Activated naive CD4-positive, alpha-beta T cell treated with anti-CD3 and anti-CD28 coated beads for 36 hours (primary cell): ENCODE measurements at regions of chr6 and their contacts with region 1.

Region 1: DNA sequence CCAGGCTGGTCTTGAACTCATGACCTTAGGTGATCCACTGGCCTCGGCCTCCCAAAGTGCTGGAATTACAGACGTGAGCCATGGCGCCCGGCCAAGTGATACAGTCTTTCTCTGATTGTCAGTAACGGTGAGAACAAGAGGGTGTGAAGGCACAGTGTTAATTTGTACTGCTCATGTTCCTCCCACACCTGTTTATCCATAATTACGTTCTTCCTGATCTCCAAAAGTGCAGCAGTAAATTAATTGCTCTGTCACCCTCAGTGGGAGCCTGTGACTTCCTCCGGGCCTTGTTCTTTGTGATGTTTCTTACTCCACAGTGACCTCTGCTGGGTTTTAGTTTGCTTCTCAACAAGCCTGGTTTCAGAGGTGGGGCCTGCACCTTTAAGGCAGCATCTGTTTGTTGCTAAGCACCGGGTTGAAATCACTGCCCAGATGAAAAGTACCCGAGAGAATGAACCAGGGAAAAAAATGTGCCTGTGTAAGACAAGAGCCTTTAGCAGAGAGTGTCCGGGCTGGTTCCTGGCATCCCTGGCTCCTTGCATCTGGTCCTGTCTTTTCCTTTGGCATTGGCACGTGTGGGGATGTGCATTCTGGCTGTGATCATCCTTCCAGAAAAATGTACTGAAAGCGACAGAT is 89.1 kb upstream of the CLDN20 start:
- DNase-seq: peak; percentile 81
- H3K4me3 Mint-ChIP-seq: no peak overlapping the region
- H3K27ac Mint-ChIP-seq: no peak overlapping the region
- H3K4me1 Mint-ChIP-seq: peaks cover 48% of the 10 kb centered on the region
- H3K27me3 Mint-ChIP-seq: no peaks in the 10 kb centered on the region

Region 2: DNA sequence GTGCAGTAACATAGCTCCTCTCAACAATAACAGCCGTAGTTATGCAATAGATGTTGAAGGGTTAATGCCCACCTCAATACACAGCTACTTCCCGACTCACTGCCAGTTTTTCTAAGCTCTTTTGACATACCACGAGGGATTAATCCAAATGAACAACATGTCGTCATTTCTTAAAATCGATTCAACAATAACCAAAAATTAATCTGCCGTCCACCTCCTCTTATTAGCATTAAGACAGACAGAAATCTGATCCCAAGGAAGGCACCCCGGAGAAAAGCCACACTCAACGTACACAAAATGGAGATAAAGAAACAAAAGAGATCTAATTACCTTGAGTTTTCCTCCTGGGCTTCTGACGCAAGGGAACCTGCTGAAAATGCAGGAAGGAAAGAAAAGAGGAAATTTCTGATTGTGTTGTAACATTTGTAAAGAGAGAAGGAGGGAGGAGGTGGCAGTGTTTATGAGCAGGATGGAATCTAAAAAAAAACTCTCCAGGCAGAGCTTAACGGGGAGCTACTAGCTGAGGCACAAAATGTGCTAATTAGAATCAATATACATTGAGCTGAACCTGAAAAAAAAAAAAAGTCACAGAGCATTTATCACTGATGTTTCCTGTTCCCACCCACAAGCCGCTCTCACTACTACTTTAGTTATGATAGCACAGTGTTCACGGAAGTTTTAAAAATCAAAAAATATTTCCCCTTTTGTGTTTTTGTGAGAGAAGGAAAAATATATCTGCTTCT is 927.4 kb before region 1 on chr6:
- CTCF ChIA-PET with region 1: no interaction called
- intact Hi-C with region 1: loop called (anchors 1 kb)
- DNase-seq: peak; percentile 69
- H3K4me3 Mint-ChIP-seq: peak overlapping the region; percentile 87
- H3K27ac Mint-ChIP-seq: peak overlapping the region; percentile 98
- H3K4me1 Mint-ChIP-seq: peaks cover 68% of the 10 kb centered on the region
- H3K27me3 Mint-ChIP-seq: no peaks in the 10 kb centered on the region

Region 3: DNA sequence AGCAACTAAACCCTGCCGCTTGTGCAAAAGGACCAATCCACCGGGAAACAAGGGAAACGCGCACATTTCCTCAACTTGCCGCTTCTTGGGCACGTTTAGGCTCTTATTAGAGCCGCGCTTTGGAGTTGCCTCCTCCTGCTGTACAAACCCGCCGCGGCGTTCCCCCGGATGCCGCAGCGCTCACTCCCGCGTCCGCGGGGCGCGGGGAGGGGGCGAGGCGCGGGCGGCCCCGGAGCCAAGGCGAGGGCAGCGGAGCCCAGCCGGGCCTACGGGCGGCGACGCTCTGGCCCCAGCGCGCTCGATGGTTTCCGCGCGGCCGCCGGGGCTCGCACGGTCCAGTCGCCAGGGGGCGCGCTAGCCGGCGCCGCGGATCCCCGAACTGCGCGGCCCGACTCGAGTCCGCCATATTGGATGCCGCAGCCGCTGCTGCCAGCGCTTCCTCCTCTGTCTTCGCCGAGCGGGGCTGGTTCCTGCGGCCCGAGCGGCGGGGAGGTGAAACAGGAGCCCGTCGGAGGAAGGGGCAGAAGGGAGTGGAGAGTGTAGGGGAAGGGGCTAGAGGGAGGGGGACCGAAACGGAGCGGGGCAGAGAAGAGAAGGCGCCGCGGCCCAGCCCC is 441.6 kb before region 1 on chr6 and contains the start of gene SCAF8:
- CTCF ChIA-PET with region 1: no interaction called
- intact Hi-C with region 1: loop called (anchors 1 kb)
- DNase-seq: peak; percentile 83
- H3K4me3 Mint-ChIP-seq: peak within 1 kb of the TSS; percentile 85
- H3K27ac Mint-ChIP-seq: peak within 1 kb of the TSS; percentile 93
- H3K4me1 Mint-ChIP-seq: peaks cover 44% of the 10 kb centered on the region
- H3K27me3 Mint-ChIP-seq: no peaks in the 10 kb centered on the region
- total RNA-seq, gene SCAF8: 27.2 to 28.0 TPM

Region 4: GRCh38 chr6:154995284-154996015 is 179.2 kb before region 1 on chr6 and contains the start of gene TIAM2:
- CTCF ChIA-PET with region 1: interaction called, 3 read pairs
- intact Hi-C with region 1: loop called (anchors 2 kb)
- DNase-seq: peak; percentile 17
- H3K4me3 Mint-ChIP-seq: peak within 1 kb of the TSS; percentile 64
- H3K27ac Mint-ChIP-seq: no peak within 1 kb of the TSS
- H3K4me1 Mint-ChIP-seq: peaks cover 8% of the 10 kb centered on the region
- H3K27me3 Mint-ChIP-seq: peaks cover 32% of the 10 kb centered on the region
- total RNA-seq, gene TIAM2: 1.6 to 3.0 TPM

Region 5: GRCh38 chr6:155078331-155078745 is 96.4 kb before region 1 on chr6:
- CTCF ChIA-PET with region 1: no interaction called
- intact Hi-C with region 1: no loop called
- DNase-seq: no peak
- H3K4me3 Mint-ChIP-seq: no peak overlapping the region
- H3K27ac Mint-ChIP-seq: no peak overlapping the region
- H3K4me1 Mint-ChIP-seq: peaks cover 12% of the 10 kb centered on the region
- H3K27me3 Mint-ChIP-seq: peaks cover 2% of the 10 kb centered on the region

Region 6: GRCh38 chr6:155188707-155189496 is 14.2 kb after region 1 on chr6:
- CTCF ChIA-PET with region 1: interaction called, 4 read pairs
- intact Hi-C with region 1: loop called (anchors 1 kb)
- DNase-seq: no peak
- H3K4me3 Mint-ChIP-seq: no peak overlapping the region
- H3K27ac Mint-ChIP-seq: no peak overlapping the region
- H3K4me1 Mint-ChIP-seq: peaks cover 50% of the 10 kb centered on the region
- H3K27me3 Mint-ChIP-seq: no peaks in the 10 kb centered on the region

Region 7: GRCh38 chr6:155212616-155213365 is 38.1 kb after region 1 on chr6:
- CTCF ChIA-PET with region 1: no interaction called
- intact Hi-C with region 1: no loop called
- DNase-seq: no peak
- H3K4me3 Mint-ChIP-seq: no peak overlapping the region
- H3K27ac Mint-ChIP-seq: no peak overlapping the region
- H3K4me1 Mint-ChIP-seq: no peaks in the 10 kb centered on the region
- H3K27me3 Mint-ChIP-seq: no peaks in the 10 kb centered on the region

Region 8: DNA sequence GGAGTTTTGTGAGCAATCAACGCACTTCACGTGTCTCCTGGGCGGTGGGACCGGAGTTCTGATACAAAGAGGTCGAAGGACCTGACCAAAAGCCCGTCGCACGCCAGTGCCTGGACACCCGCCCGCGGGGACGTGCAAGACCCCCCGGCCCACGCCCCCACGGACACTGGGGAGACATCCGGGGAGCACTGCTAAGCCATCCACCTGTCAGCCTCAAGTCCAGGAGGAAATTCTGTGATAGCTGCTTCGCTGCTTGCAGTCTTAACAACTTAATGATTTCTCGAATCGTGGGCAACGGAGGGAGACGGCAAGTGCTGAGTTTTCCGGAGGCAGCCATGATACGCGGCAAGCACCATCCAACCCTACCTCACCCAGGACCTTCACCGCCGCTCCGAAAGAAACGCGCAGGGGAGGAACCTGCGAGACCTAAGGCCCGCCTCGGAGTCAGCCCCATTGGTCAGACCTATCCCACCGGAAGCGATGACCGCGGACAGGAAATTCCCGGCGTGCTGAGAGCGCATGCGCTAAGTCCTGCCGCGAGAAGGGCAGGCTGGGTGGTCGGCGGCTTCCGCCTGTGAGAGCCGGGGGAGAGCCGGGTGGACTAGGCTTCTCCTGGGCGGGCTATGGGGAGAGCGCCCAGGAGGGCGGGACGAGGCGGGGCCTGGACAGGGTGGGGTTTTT is 139.5 kb after region 1 on chr6 and contains the start of gene TFB1M:
- CTCF ChIA-PET with region 1: interaction called, 47 read pairs
- intact Hi-C with region 1: loop called (anchors 1 kb)
- DNase-seq: peak; percentile 99
- H3K4me3 Mint-ChIP-seq: peak within 1 kb of the TSS; percentile 97
- H3K27ac Mint-ChIP-seq: peak within 1 kb of the TSS; percentile 93
- H3K4me1 Mint-ChIP-seq: peaks cover 30% of the 10 kb centered on the region
- H3K27me3 Mint-ChIP-seq: no peaks in the 10 kb centered on the region
- total RNA-seq, gene TFB1M: 38.7 to 45.3 TPM